ENCODE measurements at regions of chr20 and their contacts with region 1.

Region 1: DNA sequence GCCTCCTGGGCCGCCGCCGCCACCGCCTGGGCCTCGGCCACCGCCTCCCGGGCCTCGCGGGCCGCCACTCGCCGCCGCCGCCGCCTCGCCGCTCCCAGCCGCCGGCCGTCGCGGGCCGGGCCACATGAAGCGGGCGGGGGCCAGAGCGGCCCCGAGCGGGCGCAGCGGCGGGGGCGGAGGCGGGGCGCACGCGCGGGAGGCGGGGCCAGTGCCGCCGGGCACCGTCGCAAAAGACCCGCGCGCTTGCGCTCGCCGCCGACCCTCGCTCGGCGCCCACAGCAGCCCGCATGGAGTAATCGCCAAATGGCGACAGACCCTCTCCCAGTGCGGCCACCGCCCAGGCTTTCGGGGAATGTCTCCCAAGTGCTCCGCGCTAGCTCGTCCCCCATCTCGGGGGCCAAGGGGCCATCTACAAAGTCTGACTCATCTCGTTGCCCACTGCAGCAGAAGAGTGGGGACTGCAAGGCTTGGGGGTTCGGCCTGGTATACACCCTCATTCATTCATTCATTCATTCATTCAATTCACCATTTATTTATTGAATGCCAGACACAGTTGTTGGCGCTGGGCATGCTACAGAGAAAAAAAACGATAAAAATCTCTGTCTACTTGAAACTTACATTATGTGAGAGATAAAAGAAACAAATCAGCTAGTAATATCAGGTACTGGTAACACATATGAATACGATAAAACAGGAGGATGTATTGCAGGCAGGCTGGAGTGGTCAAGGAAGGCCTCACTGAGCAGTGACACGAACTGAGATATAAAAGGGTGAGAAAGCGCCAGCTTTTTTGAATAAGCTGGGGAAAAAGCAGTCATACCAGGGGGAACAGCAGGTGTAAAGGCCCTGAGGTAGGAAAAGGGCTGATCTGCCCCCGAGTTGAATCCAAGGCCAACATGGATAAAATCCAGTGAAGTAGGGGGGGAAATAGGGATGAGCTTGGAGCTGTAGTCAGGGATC is at the start of gene B4GALT5:
- DNase-seq: peak; percentile 55 to 90 (median 81)
- H3K4me3 ChIP-seq: peak within 1 kb of the TSS; percentile 61 to 98 (median 91)
- H3K27ac ChIP-seq: peak within 1 kb of the TSS; percentile 58 to 96 (median 92)
- H3K27me3 ChIP-seq: no peaks in the 10 kb centered on the region
- CTCF ChIP-seq: no peak
- total RNA-seq, gene B4GALT5: 24.2 to 52.0 (median 37.1) TPM

Region 2: GRCh38 chr20:49635166-49635565 is 78.9 kb before region 1 on chr20:
- intact Hi-C with region 1: loop called in 1 of 2 experiments (anchors 5 kb)
- DNase-seq: peak in 6 of 10 donors; percentile 23 to 56 (median 34)
- H3K4me3 ChIP-seq: no peak overlapping the region
- H3K27ac ChIP-seq: peak overlapping the region in 28 of 59 donors; percentile 6 to 63 (median 39)
- H3K27me3 ChIP-seq: no peaks in the 10 kb centered on the region
- CTCF ChIP-seq: no peak

Region 3: DNA sequence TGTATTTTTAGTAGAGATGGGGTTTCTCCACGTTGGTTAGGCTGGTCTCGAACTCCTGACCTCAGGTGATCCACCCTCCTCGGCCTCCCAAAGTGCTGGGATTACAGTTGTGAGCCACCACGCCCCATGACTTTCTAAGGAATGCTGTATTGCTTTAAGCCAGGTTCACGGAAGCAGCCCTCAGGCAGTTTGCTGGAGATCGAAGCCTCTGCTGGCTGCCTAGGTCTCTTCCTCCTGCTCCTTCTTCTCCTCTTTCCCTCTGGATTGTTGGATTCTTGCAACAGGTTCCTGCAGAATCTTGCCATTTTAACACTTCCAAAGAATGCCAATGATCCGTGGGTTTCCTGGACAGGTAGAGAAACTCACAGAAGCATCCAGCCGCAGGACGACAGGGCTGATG is 28.9 kb after region 1 on chr20:
- intact Hi-C with region 1: no loop called
- DNase-seq: no peak
- H3K4me3 ChIP-seq: no peak overlapping the region
- H3K27ac ChIP-seq: no peak overlapping the region
- H3K27me3 ChIP-seq: no peaks in the 10 kb centered on the region
- CTCF ChIP-seq: no peak

Region 4: GRCh38 chr20:49768204-49769047 is 54.4 kb after region 1 on chr20:
- intact Hi-C with region 1: loop called (anchors 5 kb)
- DNase-seq: no peak
- H3K4me3 ChIP-seq: no peak overlapping the region
- H3K27ac ChIP-seq: peak overlapping the region in 25 of 59 donors; percentile 1 to 77 (median 34)
- H3K27me3 ChIP-seq: no peaks in the 10 kb centered on the region
- CTCF ChIP-seq: no peak

Region 5: DNA sequence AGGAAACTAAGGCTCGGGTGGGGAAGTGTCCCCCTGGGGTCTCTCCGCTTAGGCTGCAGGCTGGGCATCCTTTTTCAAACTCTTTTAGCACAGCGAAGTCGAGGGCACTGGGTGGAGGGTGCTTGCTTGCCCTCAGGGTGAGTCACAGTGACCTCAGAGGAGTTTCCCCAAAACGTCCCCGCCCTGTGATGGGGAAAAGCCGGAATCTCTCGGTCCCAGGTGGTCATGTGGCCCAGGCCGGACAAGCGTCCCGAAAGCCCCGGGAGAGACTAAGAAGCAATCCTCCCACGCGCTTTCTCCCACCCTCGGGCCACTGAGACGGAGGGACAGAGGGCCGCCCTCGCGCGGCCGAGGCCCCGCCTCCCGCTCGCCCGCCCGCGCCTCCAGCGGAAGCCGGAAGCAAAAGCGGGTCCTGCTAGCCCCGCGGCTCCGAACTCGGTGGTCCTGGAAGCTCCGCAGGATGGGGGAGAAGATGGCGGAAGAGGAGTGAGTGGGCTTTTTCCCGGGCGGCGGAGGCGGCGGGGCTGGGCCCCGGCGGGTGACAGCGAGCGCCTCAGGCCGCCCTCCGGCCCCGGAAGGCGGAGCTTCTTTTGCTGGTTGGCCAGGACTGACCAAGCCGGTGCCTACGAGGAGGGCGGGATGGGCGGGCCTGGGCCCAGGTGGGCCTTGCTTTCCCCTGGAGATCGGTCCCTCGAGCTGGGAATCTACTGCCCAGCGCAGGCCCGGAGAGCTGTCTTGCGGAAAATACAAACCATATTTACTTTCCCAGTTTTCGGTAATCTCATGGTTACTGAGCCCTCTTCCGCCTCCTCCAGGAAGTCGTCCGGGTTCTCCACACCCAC is 98.7 kb after region 1 on chr20 and contains the start of gene SLC9A8:
- intact Hi-C with region 1: loop called (anchors 2 kb)
- DNase-seq: peak; percentile 77 to 94 (median 92)
- H3K4me3 ChIP-seq: peak within 1 kb of the TSS; percentile 50 to 99 (median 89)
- H3K27ac ChIP-seq: peak within 1 kb of the TSS; percentile 52 to 97 (median 91)
- H3K27me3 ChIP-seq: no peaks in the 10 kb centered on the region
- CTCF ChIP-seq: peak in 54 of 56 donors; percentile 10 to 75 (median 54)
- total RNA-seq, gene SLC9A8: 8.7 to 21.9 (median 14.9) TPM

Measured in dorsolateral prefrontal cortex (tissue), 120 donors.